PC-3 (cell line): ENCODE measurements at regions of chr4 and their contacts with region 1.

Region 1: DNA sequence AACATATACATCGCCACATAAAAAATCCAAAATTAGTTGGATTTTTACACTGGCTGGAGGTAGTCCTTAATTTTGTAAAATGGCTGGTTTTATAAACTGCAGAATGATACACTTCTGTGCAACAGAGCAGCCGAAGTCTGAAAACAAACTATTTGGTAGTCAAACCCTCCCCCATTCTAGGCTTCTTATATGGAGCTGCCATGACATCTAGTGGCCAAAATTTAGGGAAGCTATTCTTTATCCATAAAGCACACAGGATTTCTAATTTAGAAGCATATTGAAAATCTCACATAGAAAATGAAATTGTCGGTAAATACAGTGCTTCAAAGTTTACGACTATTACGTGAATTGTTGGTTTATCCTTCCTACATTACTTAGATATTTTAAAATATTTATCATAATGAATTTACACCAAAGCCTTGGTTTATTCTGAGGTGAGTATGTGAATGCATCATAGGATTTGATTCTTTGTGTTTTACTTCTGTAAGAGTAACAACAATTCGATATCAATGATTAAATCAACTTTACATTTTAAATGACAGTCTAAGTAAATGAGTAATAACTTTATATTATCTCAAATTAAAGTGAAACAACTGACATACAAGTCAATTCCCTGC is 113.4 kb upstream of the FAM241A start:
- DNase-seq: peak; percentile 66
- ATAC-seq: peak; percentile 55; the same call in 1 of the 2 replicates
- H3K4me3 ChIP-seq: no peak overlapping the region
- H3K27ac ChIP-seq: no peak overlapping the region
- H3K4me1 ChIP-seq: no peaks in the 10 kb centered on the region
- H3K27me3 ChIP-seq: peaks cover 46% of the 10 kb centered on the region
- CTCF ChIP-seq: peak; percentile 76

Region 2: DNA sequence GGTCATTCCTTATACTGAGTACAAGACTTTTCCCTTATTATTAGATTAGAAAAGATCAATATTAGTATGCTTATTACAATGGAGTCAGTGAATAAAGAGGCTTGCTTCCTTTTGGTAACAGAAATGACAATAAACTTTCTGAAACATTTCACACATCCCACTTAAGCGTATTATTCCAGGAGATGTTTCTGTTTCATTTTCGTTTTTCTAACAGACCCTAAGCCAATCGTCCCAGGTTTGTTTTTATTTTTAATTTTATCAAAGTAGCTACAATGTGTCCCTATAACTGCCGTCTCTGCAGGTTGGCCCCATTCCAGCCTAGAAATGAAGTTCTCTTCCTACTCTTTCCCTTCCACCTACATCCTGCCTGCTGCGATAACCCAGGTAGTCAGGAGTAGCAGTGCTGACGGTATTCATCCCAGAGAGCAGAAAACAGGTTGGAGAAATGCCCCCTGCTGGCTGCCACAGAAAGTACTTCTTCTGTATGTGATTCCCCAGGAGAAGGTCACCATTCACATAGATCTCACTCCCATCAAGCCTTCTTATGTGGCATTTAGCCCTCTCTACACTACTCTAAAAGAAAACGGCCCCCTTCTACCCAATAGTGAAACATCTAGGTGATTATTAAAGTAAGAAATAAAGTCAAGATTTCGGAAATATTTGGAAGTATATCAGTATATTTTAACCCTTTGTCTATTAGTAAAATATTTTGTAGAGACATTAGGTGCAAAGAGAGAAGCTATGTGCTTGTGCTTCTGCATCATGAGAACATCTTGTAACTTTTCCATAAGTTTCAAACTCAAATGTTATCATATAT is 1515.5 kb before region 1 on chr4:
- CTCF ChIA-PET with region 1: no interaction called
- POLR2A ChIA-PET with region 1: no interaction called
- intact Hi-C with region 1: loop called (anchors 5 kb)
- DNase-seq: peak; percentile 78
- ATAC-seq: peak; percentile 97
- H3K4me3 ChIP-seq: peak overlapping the region; percentile 76
- H3K27ac ChIP-seq: no peak overlapping the region
- H3K4me1 ChIP-seq: no peaks in the 10 kb centered on the region
- H3K27me3 ChIP-seq: no peaks in the 10 kb centered on the region
- CTCF ChIP-seq: peak; percentile 78

Region 3: GRCh38 chr4:110631584-110632505 is 1400.0 kb before region 1 on chr4:
- CTCF ChIA-PET with region 1: no interaction called
- POLR2A ChIA-PET with region 1: no interaction called
- intact Hi-C with region 1: loop called (anchors 10 kb)
- DNase-seq: peak; percentile 80
- ATAC-seq: peak; percentile 99
- H3K4me3 ChIP-seq: peak overlapping the region; percentile 61
- H3K27ac ChIP-seq: no peak overlapping the region
- H3K4me1 ChIP-seq: peaks cover 6% of the 10 kb centered on the region; the same call in 1 of the 2 replicates
- H3K27me3 ChIP-seq: peaks cover 77% of the 10 kb centered on the region
- CTCF ChIP-seq: peak; percentile 85

Region 4: GRCh38 chr4:111641955-111642579 is 389.8 kb before region 1 on chr4:
- CTCF ChIA-PET with region 1: no interaction called
- POLR2A ChIA-PET with region 1: no interaction called
- intact Hi-C with region 1: loop called (anchors 1 kb)
- DNase-seq: peak; percentile 81
- ATAC-seq: peak; percentile 71
- H3K4me3 ChIP-seq: no peak overlapping the region
- H3K27ac ChIP-seq: no peak overlapping the region
- H3K4me1 ChIP-seq: peaks cover 6% of the 10 kb centered on the region; the same call in 1 of the 2 replicates
- H3K27me3 ChIP-seq: peaks cover 23% of the 10 kb centered on the region
- CTCF ChIP-seq: peak; percentile 89

Region 5: DNA sequence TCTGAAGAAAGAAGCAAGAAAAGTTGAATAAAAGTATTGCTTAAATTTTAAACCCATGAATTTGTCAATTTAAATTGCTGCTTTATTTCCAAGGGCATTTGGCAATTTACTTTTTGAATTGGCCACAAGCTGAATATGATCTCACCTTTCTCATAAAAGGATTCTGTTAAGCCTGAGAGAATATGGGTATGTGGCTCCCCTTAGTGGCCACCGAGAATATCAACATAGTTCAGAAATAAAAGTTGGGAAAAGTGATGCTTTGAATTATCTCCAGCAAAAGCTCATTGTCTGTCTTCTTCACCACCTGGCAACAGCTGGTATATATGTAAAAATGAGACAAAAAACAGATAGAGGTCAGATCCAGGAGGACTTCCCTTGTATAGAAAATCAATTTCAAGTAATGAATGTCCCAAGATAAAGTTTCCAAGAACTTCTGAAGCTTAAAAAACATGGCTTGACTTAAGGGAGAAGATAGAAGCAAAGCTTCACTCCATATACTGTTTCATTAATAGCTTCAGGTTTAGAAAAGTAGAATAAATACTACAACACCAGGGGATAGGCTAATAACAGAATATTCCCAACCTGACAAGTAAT is 177.2 kb before region 1 on chr4:
- CTCF ChIA-PET with region 1: no interaction called
- POLR2A ChIA-PET with region 1: no interaction called
- intact Hi-C with region 1: loop called (anchors 10 kb)
- DNase-seq: peak; percentile 49
- ATAC-seq: peak; percentile 64
- H3K4me3 ChIP-seq: no peak overlapping the region
- H3K27ac ChIP-seq: no peak overlapping the region
- H3K4me1 ChIP-seq: no peaks in the 10 kb centered on the region
- H3K27me3 ChIP-seq: peaks cover 30% of the 10 kb centered on the region
- CTCF ChIP-seq: peak; percentile 68

Region 6: GRCh38 chr4:111943795-111944203 is 88.0 kb before region 1 on chr4:
- CTCF ChIA-PET with region 1: no interaction called
- POLR2A ChIA-PET with region 1: no interaction called
- intact Hi-C with region 1: loop called (anchors 5 kb)
- DNase-seq: peak; percentile 47
- ATAC-seq: peak; percentile 35; the same call in 1 of the 2 replicates
- H3K4me3 ChIP-seq: no peak overlapping the region
- H3K27ac ChIP-seq: no peak overlapping the region
- H3K4me1 ChIP-seq: no peaks in the 10 kb centered on the region
- H3K27me3 ChIP-seq: peaks cover 21% of the 10 kb centered on the region; the same call in 1 of the 2 replicates
- CTCF ChIP-seq: peak; percentile 62